ENCODE measurements at regions of chr9 and their contacts with region 1.

Region 1: DNA sequence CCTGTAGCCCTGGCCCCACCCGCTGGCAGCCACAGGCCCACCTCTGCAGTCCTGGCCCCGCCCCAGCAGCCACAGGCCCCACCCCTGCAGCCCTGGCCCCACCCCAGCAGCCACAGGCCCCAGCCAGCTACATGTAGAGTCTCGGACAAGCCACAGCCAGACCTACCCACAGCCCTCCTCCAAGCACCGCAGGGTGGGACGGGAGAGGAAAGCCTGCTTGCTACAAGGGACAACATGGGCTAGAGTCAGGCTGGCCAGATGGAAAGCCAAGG is 49.5 kb upstream of the SARDH start:
- DNase-seq: no peak
- ATAC-seq: no peak; the same call in 1 of the 2 replicates
- H3K4me3 ChIP-seq: no peak overlapping the region
- H3K27ac ChIP-seq: no peak overlapping the region
- H3K4me1 ChIP-seq: no peaks in the 10 kb centered on the region
- H3K27me3 ChIP-seq: no peaks in the 10 kb centered on the region
- CTCF ChIP-seq: no peak

Region 2: DNA sequence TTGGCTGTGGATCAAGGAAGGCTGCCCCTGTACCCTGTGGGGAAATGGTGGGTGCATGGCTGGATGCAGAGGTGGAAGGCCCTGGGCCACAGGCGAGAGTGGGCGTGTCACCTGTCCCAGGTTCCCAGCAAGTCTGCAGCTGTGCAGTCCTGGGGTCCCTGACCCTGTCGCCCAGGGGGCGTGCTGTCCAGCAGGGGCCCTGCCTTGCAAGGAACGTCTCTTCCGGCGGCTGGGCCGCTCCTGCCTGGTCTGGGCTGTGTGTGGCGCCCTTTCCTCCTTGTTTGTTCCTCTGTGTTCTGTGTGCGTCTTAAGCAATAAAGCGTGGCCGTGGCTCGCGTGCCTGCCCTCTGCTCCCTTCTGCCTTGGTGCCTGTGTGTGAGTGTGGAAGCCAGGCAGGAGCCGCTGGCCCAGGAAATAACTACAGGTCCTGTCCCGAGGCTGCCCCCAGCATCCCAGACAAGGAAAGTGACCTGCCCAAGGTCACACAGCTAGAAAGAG is 317.2 kb before region 1 on chr9:
- CTCF ChIA-PET with region 1: no interaction called
- POLR2A ChIA-PET with region 1: no interaction called
- intact Hi-C with region 1: no loop called
- DNase-seq: no peak
- ATAC-seq: no peak
- H3K4me3 ChIP-seq: no peak overlapping the region
- H3K27ac ChIP-seq: no peak overlapping the region
- H3K4me1 ChIP-seq: no peaks in the 10 kb centered on the region
- H3K27me3 ChIP-seq: no peaks in the 10 kb centered on the region
- CTCF ChIP-seq: no peak

Region 3: DNA sequence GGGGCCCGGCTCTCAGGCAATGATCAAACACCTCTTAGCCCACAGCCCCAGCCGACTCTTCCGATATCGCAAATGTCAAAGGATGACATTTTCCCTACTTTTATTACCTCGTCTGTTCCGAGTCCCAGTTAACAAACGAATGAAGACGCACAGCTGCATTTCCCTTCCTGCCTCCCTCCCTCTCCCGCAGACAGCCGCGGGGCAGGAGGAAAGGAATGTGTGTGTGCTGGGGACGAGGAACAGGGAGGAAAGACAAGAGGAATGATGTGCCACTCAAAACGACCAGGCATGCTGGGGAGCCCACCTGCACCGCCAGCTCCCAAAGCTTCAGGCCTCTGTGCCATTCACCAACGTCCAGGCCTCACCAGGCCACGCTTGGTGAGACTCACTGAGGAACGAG is 76.3 kb after region 1 on chr9:
- CTCF ChIA-PET with region 1: no interaction called
- POLR2A ChIA-PET with region 1: interaction called, 15 read pairs
- intact Hi-C with region 1: no loop called
- DNase-seq: no peak
- ATAC-seq: no peak
- H3K4me3 ChIP-seq: no peak overlapping the region
- H3K27ac ChIP-seq: no peak overlapping the region
- H3K4me1 ChIP-seq: no peaks in the 10 kb centered on the region
- H3K27me3 ChIP-seq: no peaks in the 10 kb centered on the region
- CTCF ChIP-seq: no peak

Measured in PC-3 (cell line).